ENCODE measurements at regions of chr1 and their contacts with region 1.

Region 1: GRCh38 chr1:89719502-89720306 is 86.8 kb downstream of the LRRC8C start:
- DNase-seq: no peak
- ATAC-seq: peak; percentile 83
- H3K4me3 Mint-ChIP-seq: peak overlapping the region; percentile 63
- H3K27ac Mint-ChIP-seq: peak overlapping the region; percentile 100
- H3K4me1 Mint-ChIP-seq: peaks cover 89% of the 10 kb centered on the region
- H3K27me3 Mint-ChIP-seq: no peaks in the 10 kb centered on the region

Region 2: DNA sequence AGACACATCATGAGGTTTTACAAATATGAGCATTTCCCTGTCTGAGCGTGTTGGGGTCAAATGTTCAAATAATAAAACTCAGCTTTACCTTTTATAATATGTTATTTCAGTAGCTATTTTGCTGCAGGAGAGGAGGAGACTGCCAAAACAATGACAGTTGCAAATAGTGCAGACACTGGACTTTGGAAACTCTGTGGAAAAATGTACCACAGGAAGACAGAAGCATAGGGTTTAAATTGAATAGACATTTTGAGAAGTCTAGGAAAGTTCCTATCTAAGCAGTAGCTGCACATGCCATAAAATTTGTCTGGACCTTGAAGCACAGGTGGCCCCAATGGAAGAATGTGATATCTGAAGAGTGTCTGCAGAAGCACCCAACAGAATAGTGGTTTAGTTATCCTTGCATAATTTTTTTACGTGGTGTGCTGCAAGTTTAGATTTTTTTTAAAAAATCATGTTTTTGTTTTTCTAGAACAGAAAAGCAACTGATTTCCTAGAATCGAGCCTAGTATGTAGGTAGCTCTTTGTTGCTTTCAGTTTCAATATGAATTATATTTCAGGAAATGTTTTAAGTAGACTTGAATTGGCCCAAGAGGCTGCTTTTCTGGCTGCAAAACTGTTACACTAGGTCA is 433.0 kb before region 1 on chr1:
- CTCF ChIA-PET with region 1: no interaction called
- POLR2A ChIA-PET with region 1: no interaction called
- intact Hi-C with region 1: loop called in 1 of 2 experiments (anchors 10 kb)
- DNase-seq: no peak
- ATAC-seq: peak; percentile 77
- H3K4me3 Mint-ChIP-seq: peak overlapping the region; percentile 44
- H3K27ac Mint-ChIP-seq: peak overlapping the region; percentile 93
- H3K4me1 Mint-ChIP-seq: peaks cover 74% of the 10 kb centered on the region
- H3K27me3 Mint-ChIP-seq: no peaks in the 10 kb centered on the region

Region 3: DNA sequence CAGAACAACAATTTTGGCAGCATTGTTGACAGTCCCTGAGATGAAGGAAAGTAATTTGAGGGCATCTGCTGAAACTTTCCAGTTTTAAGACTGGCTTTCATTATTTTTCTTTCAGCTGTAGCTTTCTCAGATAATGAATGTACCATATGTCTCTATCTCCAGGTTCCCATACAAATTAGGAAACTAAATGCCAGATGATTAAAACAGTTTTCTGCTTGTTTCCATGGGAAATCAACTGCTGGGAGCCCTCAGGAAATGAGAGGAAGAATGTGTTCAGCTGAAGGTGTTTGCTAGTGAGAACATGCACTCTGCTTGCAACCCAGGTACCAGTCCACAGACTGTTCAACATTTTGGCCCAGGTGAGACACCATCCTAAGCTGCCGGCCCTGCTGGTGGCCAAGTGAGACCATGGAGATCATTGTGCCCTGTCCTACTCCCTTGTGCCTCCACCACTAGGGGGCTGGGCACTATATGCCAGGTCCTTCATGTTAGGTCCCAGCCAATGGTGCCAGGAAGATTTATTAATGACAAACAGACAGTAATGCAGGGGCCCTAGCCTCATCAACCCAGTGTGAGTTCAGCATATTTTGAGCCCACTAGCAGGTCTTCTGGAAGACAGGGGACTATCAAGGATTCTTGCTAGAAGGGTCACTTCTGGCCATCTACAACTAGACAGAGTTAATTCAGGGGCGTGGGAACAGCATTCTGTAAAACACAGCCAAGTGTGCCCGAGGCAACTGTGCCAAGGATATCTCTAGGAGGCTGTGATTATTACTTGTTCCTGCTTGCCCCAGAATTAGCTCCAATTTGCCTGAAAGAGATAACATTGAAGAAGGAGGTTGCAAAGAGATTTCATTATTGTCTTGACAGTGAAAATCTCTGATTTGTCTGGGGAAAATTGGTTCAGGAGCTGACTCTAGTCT is 103.8 kb before region 1 on chr1:
- CTCF ChIA-PET with region 1: interaction called, 5 read pairs
- POLR2A ChIA-PET with region 1: interaction called, 20 read pairs
- intact Hi-C with region 1: loop called (anchors 1 kb)
- DNase-seq: peak; percentile 46
- ATAC-seq: no peak
- H3K4me3 Mint-ChIP-seq: no peak overlapping the region
- H3K27ac Mint-ChIP-seq: no peak overlapping the region
- H3K4me1 Mint-ChIP-seq: peaks cover 86% of the 10 kb centered on the region
- H3K27me3 Mint-ChIP-seq: no peaks in the 10 kb centered on the region

Region 4: GRCh38 chr1:89670163-89670562 is 49.5 kb before region 1 on chr1:
- CTCF ChIA-PET with region 1: interaction called, 13 read pairs
- POLR2A ChIA-PET with region 1: interaction called, 3 read pairs
- intact Hi-C with region 1: loop called in 1 of 2 experiments (anchors 5 kb)
- DNase-seq: no peak
- ATAC-seq: peak; percentile 65
- H3K4me3 Mint-ChIP-seq: peak overlapping the region; percentile 36
- H3K27ac Mint-ChIP-seq: peak overlapping the region; percentile 88
- H3K4me1 Mint-ChIP-seq: peaks cover 93% of the 10 kb centered on the region
- H3K27me3 Mint-ChIP-seq: no peaks in the 10 kb centered on the region

Region 5: DNA sequence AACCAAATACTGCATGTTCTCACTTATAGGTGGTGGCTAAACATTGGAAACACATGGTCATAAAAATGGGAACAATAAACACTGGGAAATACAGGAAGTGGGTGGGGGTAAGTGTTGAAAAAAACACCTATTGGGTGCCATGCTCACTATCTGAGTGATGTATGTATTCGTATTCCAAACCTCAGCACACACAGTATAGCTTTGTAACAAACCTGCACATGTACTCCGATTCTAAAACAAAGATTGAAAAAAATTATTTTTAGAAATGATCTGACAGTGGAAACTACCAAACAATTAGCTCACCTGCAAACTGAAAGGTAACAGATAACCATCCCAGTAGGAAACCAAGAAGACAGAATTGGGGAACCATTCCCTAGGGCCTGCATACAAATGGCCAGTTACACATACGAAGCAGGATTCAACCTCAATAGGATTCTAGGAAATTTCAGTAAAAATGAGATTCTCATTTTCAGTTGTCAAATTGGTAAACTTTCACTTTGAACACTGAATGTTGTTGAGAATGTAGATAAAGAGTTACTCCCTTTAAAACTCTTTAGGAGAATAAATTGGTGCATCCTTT is 13.0 kb after region 1 on chr1:
- CTCF ChIA-PET with region 1: interaction called, 5 read pairs
- POLR2A ChIA-PET with region 1: interaction called, 3 read pairs
- intact Hi-C with region 1: loop called in 1 of 2 experiments (anchors 1 kb)
- DNase-seq: no peak
- ATAC-seq: peak; percentile 37
- H3K4me3 Mint-ChIP-seq: no peak overlapping the region
- H3K27ac Mint-ChIP-seq: peak overlapping the region; percentile 65
- H3K4me1 Mint-ChIP-seq: peaks cover 56% of the 10 kb centered on the region
- H3K27me3 Mint-ChIP-seq: no peaks in the 10 kb centered on the region

Region 6: GRCh38 chr1:89780721-89781120 is 61.0 kb after region 1 on chr1:
- CTCF ChIA-PET with region 1: interaction called, 16 read pairs
- POLR2A ChIA-PET with region 1: interaction called, 6 read pairs
- intact Hi-C with region 1: loop called (anchors 1 to 2 kb)
- DNase-seq: peak; percentile 59
- ATAC-seq: peak; percentile 73
- H3K4me3 Mint-ChIP-seq: peak overlapping the region; percentile 48
- H3K27ac Mint-ChIP-seq: peak overlapping the region; percentile 86
- H3K4me1 Mint-ChIP-seq: peaks cover 44% of the 10 kb centered on the region
- H3K27me3 Mint-ChIP-seq: no peaks in the 10 kb centered on the region